Activated CD8-positive, alpha-beta T cell treated with anti-CD3 and anti-CD28 coated beads, Interleukin-2, amount 10 ng/mL, durations not matched to agents 7 days and 5 days (primary cell): ENCODE measurements at regions of chr19 and their contacts with region 1.

Region 1: GRCh38 chr19:6654347-6655310 is 15.3 kb downstream of the TNFSF14 start:
- DNase-seq: peak; percentile 86
- ATAC-seq: peak; percentile 81
- H3K4me3 Mint-ChIP-seq: peak overlapping the region; percentile 83
- H3K27ac Mint-ChIP-seq: peak overlapping the region; percentile 99
- H3K4me1 Mint-ChIP-seq: peaks cover 84% of the 10 kb centered on the region
- H3K27me3 Mint-ChIP-seq: no peaks in the 10 kb centered on the region

Region 2: DNA sequence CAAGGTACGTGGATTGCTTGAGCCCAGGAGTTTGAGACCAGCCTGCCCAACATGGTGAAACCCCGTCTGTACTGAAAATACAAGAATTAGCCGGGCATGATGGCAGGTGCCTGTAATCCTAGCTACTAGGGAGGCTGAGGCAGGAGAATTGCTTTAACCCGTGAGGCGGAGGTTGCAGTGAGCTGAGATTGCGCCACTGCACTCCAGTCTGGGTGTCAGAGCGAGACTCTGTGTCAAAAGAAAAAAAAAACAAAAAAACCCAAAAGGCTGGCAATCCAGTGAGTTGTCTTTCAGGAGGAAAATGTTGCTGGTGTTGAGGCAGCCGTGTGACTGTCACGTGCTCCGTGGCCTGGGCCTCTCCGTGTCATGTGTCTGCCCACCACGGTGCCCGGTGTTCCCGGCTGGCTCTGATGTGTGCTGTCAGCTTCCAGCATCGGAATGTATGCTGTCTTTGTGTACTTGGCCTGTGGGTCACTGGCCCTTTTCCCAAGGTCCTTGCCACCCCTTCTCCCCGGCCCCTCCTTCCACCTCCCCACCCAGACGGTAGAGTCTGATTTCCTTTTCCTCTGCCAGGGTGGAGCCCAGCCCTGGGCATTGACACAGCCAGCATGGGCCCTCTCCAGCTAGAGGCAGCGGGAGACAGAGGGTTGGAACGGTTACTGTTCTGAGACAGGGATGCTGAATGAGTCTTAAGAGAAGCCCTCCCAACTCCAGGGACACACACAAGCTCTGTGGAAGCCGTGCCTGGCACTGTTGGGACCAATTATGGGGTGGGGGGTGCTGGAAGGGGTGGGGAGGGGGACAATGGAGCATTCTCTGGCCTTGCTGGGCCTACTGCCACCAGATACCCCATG is 145.3 kb before region 1 on chr19:
- CTCF ChIA-PET with region 1: no interaction called
- POLR2A ChIA-PET with region 1: no interaction called
- DNase-seq: no peak
- ATAC-seq: no peak
- H3K4me3 Mint-ChIP-seq: no peak overlapping the region
- H3K27ac Mint-ChIP-seq: no peak overlapping the region
- H3K4me1 Mint-ChIP-seq: peaks cover 10% of the 10 kb centered on the region
- H3K27me3 Mint-ChIP-seq: no peaks in the 10 kb centered on the region

Region 3: DNA sequence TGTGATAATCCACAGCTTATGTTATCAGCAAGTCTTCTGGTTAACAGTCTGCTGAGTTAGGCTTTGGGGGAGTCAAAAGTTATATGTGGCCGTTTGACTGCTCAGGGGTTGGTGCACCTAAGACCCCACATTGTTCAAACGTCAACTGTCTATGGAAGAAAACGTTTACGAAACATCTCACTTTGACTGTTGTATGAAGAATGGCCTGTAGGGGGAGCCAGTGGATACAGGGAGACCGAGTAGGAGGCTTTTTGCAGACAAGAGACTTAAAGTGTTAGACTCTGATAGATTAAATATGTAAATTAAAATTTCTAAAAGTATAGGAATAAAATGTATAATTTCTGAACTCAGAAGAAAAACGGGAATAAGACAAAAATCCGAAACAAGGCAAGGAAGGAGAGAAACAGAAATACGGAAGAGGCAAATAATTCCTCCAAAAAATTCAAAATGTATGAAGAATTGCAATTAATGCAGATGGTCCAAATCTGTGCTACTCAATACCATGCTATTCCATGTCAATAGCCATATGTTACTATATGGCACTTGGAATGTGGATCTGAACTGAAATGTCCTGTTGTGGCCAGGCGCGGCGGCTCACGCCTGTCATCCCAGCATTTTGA is 22.5 kb before region 1 on chr19:
- CTCF ChIA-PET with region 1: interaction called, 39 read pairs
- POLR2A ChIA-PET with region 1: interaction called, 3 read pairs
- DNase-seq: peak; percentile 93
- ATAC-seq: peak; percentile 82
- H3K4me3 Mint-ChIP-seq: no peak overlapping the region
- H3K27ac Mint-ChIP-seq: no peak overlapping the region
- H3K4me1 Mint-ChIP-seq: peaks cover 40% of the 10 kb centered on the region
- H3K27me3 Mint-ChIP-seq: peaks cover 4% of the 10 kb centered on the region

Region 4: GRCh38 chr19:6639439-6639838 is 15.2 kb before region 1 on chr19:
- CTCF ChIA-PET with region 1: interaction called, 46 read pairs
- POLR2A ChIA-PET with region 1: interaction called, 22 read pairs
- DNase-seq: peak; percentile 75
- ATAC-seq: peak; percentile 71
- H3K4me3 Mint-ChIP-seq: no peak overlapping the region
- H3K27ac Mint-ChIP-seq: peak overlapping the region; percentile 94
- H3K4me1 Mint-ChIP-seq: peaks cover 64% of the 10 kb centered on the region
- H3K27me3 Mint-ChIP-seq: no peaks in the 10 kb centered on the region

Region 5: GRCh38 chr19:6668691-6669090 is 14.1 kb after region 1 on chr19:
- CTCF ChIA-PET with region 1: interaction called, 6 read pairs
- POLR2A ChIA-PET with region 1: interaction called, 18 read pairs
- DNase-seq: peak; percentile 49
- ATAC-seq: no peak
- H3K4me3 Mint-ChIP-seq: peak overlapping the region; percentile 99
- H3K27ac Mint-ChIP-seq: peak overlapping the region; percentile 91
- H3K4me1 Mint-ChIP-seq: peaks cover 36% of the 10 kb centered on the region
- H3K27me3 Mint-ChIP-seq: no peaks in the 10 kb centered on the region

Region 6: DNA sequence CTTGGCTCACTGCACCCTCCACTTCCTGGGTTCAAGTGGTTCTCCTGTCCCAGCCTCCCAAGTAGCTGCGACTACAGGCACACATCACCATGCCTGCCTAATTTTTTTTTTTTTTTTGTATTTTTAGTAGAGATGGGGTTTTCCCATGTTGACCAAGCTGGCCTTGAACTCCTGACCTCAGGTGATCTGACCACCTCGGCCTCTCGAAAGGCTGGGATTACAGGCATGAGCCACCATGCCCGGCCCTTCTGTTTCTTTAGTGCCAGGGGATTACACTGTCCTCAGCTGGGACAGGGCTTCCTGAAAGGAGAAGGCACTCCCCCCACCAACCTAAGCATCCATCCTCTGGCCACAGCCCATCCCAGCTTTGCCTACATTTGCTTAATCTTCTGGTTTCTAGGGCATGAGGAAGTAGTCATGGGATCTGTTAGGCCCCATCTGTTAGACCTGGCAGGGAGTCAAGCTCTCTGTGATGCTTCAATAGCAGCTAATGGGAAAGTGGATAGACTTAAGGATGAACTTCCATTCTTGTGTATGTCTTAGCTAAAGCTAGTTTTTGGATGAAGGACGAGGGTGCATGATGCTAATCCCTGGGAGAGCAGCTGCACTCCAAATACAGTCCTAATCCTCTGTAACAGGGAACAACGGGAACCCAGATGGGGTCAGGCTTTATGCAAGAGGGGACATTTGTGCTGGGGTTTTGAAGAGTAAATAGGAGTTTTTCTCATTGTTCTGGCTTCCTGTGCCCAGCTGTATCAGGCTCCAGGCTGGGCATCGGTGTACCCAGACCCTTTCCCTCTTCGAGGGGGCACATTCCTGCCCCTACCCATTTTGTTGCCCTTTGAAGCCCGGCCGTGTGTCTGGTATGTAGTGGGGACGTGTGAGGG is 120.4 kb after region 1 on chr19:
- CTCF ChIA-PET with region 1: no interaction called
- POLR2A ChIA-PET with region 1: no interaction called
- DNase-seq: no peak
- ATAC-seq: no peak
- H3K4me3 Mint-ChIP-seq: peak overlapping the region; percentile 97
- H3K27ac Mint-ChIP-seq: peak overlapping the region; percentile 70
- H3K4me1 Mint-ChIP-seq: peaks cover 59% of the 10 kb centered on the region
- H3K27me3 Mint-ChIP-seq: no peaks in the 10 kb centered on the region